ENCODE measurements at regions of chr1 and their contacts with region 1.

Region 1: DNA sequence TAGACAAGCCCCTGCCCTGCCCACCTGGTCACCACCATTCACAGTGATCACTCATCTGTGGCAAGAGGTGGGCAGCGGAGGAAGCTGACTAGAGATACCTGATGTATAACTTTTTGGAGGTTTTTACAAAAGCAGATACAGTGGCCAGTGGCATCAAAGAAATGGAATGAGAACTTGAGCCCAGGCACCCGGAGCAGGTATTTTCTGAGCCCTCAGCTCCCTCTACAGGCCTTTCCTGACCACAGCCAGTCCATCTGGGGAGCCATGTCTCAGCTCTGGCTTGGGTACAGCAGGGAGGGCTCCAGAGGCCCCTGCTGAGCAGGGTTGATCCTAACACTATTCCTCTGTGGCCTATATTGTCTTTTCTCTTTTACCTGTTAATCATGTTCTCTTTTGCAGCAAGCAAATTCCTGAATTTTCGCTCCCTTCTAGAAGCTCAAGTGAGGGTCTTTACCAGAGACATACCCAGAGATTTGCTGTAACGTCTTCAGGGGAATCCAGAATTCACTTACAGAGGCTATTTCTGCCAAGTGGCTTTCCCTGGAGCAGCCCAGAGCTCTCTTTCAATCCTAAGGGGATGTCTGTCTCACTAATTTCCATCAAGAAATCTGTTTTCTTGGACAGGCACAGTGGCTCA is 27.3 kb downstream of the GPR157 start:
- DNase-seq: peak in 1 of 4 donors; percentile 36
- ATAC-seq: peak; percentile 83
- H3K4me3 ChIP-seq: no peak overlapping the region
- H3K27ac ChIP-seq: no peak overlapping the region
- H3K4me1 ChIP-seq: no peaks in the 10 kb centered on the region
- H3K27me3 ChIP-seq: no peaks in the 10 kb centered on the region
- CTCF ChIP-seq: peak; percentile 39 to 47

Region 2: DNA sequence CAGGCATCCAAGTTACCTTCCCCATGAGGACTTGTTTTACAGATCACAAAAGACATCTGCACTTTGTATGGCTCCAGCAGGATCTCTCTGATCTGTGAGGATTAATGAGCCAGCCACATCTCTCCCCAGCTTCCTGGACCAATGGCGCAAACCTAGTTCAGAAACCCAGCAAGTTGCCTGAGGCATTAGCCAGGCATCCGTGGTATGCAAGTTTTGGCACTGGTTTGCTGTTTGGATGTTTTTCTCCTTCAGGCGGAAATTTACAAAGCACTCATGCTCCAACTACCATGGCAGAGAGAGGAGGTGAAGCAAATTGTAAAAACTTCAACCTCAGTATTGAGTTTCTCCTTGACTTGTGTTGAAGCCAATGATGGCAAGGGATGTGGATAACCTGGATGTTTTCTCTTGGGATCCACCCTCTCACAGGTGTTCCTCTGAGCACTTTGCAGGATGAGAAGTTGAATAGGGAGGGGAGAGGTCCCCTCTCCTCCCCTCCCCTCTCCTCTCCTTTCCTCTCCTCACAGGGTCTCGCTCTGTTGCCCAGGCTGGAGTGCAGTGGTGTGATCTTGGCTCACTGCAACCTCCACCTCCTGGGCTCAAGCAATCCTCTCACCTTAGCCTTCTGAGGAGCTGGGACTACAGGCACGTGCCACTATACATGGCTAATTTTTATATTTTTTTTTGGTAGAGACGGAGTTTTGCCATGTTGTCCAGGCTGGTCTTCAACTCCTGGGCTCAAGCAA is 197.5 kb before region 1 on chr1:
- intact Hi-C with region 1: no loop called
- DNase-seq: peak in 1 of 4 donors; percentile 52
- ATAC-seq: peak; percentile 84
- H3K4me3 ChIP-seq: no peak overlapping the region
- H3K27ac ChIP-seq: peak overlapping the region; percentile 43 to 50
- H3K4me1 ChIP-seq: peaks cover 0 to 17% of the 10 kb centered on the region in 2 donors
- H3K27me3 ChIP-seq: no peaks in the 10 kb centered on the region
- CTCF ChIP-seq: no peak

Region 3: DNA sequence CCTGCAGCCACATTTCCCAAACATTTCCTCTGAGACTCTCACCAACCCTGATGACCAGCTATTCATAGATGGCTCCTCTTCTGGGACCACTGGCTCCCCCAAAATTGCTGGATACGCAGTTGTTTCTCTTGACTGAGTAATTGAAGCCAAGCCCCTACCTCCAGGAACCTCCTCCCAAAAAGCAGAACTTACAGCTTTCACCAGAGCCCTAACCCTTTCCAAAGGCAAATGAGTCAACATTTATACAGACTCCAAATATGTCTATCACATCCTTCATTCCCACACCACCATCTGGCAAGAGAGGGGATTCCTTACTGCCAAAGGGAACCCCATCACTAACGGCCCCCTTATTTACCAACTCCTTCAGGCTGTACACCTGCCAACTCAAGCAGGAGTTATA is 176.2 kb before region 1 on chr1:
- intact Hi-C with region 1: loop called in 1 of 2 experiments (anchors 10 kb)
- DNase-seq: no peak
- ATAC-seq: no peak
- H3K4me3 ChIP-seq: no peak overlapping the region
- H3K27ac ChIP-seq: no peak overlapping the region
- H3K4me1 ChIP-seq: no peaks in the 10 kb centered on the region
- H3K27me3 ChIP-seq: no peaks in the 10 kb centered on the region
- CTCF ChIP-seq: no peak

Region 4: GRCh38 chr1:9009438-9010370 is 91.9 kb before region 1 on chr1:
- intact Hi-C with region 1: loop called in 1 of 2 experiments (anchors 10 kb)
- DNase-seq: peak in 2 of 4 donors; percentile 33 to 85
- ATAC-seq: peak; percentile 25
- H3K4me3 ChIP-seq: no peak overlapping the region
- H3K27ac ChIP-seq: no peak overlapping the region
- H3K4me1 ChIP-seq: peaks cover 0 to 22% of the 10 kb centered on the region in 2 donors
- H3K27me3 ChIP-seq: no peaks in the 10 kb centered on the region
- CTCF ChIP-seq: peak; percentile 23 to 35

Region 5: DNA sequence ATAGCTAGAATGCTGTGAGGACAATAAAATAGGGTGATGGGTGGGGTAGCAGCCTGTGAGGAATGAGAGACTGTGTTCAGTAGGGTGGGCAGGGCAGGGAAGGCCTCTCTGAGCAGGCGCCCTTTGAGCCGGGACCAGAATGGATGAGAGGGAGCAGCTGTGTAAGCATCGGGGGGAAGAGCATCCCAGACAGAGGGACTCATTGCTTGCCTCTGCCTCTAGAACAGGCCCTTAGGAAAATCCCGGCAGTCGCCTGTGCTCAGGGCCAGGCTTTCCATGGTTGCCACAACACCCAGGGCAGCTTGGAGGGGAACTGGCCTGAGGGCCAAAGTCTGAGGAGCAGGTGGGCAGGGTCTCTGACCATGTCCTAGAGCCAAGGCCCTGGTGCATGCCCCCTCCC is 76.2 kb before region 1 on chr1:
- intact Hi-C with region 1: no loop called
- DNase-seq: no peak
- ATAC-seq: no peak
- H3K4me3 ChIP-seq: no peak overlapping the region
- H3K27ac ChIP-seq: no peak overlapping the region
- H3K4me1 ChIP-seq: no peaks in the 10 kb centered on the region
- H3K27me3 ChIP-seq: no peaks in the 10 kb centered on the region
- CTCF ChIP-seq: no peak

Region 6: GRCh38 chr1:9234223-9235095 is 132.8 kb after region 1 on chr1 and contains the start of gene H6PD:
- intact Hi-C with region 1: no loop called
- DNase-seq: peak; percentile 82 to 97 (median 90)
- ATAC-seq: peak; percentile 90
- H3K4me3 ChIP-seq: peak within 1 kb of the TSS; percentile 50 to 52
- H3K27ac ChIP-seq: peak within 1 kb of the TSS; percentile 94 to 98
- H3K4me1 ChIP-seq: peaks cover 11 to 85% of the 10 kb centered on the region in 2 donors
- H3K27me3 ChIP-seq: no peaks in the 10 kb centered on the region
- CTCF ChIP-seq: peak; percentile 63 to 83
- polyA plus RNA-seq, gene H6PD: 49.8 to 63.0 (median 56.0) TPM